ENCODE measurements at regions of chr17 and their contacts with region 1.

Region 1: DNA sequence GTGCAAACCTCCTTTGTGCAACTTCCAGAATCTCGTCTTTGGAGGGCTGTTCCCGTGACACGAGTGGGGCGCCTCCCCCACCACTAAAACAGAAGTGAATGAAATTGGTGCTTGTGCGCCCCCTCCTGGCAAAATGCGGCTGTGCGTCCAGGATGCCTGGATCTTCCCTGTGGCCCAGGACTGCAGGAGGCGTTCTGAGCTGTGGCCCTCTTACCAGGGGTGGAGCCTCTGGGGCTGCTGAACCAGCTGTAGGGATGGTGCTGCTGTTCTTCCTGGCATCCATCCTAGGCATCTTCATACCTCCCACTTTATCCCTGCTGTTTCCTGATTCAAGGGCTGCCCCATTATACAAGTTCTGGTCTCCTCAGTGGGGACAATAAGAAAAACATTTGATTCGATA is 18.5 kb upstream of the NAGLU start:
- DNase-seq: peak; percentile 92
- H3K27ac ChIP-seq: peak overlapping the region; percentile 97
- CTCF ChIP-seq: peak; percentile 94

Region 2: GRCh38 chr17:42537826-42538574 is 20.5 kb after region 1 on chr17:
- CTCF ChIA-PET with region 1: no interaction called
- POLR2A ChIA-PET with region 1: interaction called, 10 read pairs
- DNase-seq: no peak
- H3K27ac ChIP-seq: peak overlapping the region; percentile 91
- CTCF ChIP-seq: no peak